ENCODE measurements at regions of chr6 and their contacts with region 1.

Region 1: DNA sequence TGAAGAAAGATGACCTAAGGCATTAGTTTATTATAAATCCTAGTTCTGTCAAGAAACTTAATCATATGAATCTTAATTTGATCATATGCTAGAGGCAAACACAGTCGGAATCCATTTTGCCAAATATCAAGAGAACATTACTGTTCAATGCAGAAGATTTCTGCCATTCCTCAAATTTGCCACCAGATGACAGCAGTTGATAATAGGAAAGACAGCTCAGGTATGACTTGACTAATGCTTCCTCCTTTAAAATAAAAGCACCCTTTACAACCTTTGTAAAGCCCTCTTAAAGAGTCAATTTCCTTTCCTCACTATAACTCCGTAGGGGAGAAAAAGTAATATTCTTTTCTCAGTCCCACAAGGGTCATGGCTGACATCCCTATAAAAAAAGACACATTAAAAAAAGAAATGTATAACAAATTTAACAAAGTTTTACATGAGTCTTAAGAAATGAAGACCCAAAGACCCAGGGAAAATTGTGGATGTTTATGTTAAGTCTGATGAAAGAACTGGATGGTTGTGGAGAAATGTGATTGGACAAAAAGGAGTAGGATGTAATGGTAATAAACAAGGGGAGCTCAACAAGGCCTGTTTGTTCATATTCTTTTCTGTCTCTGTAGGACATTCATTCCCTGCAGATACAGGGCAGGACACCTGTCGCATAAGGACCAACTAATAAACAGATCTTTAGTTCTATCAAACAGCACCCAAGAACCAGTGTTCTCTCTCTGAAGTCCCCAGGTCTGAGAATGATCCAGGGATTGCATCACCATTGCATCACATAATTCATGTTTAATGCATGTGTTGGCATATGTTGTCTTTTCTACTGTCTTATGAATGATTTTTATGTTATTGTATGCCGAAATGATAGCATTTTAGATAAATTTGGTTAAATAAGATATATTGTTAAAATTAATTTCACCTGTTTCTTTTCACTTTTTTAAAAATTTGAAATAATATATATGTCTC is 23.0 kb upstream of the IL17A start:
- DNase-seq: no peak
- H3K4me3 ChIP-seq: no peak overlapping the region
- H3K27ac ChIP-seq: no peak overlapping the region
- H3K4me1 ChIP-seq: no peaks in the 10 kb centered on the region
- H3K27me3 ChIP-seq: peaks cover 4% of the 10 kb centered on the region
- CTCF ChIP-seq: peak; percentile 43

Region 2: GRCh38 chr6:51626391-51626790 is 536.8 kb before region 1 on chr6:
- intact Hi-C with region 1: no loop called
- DNase-seq: no peak
- H3K4me3 ChIP-seq: no peak overlapping the region
- H3K27ac ChIP-seq: no peak overlapping the region
- H3K4me1 ChIP-seq: no peaks in the 10 kb centered on the region
- H3K27me3 ChIP-seq: no peaks in the 10 kb centered on the region
- CTCF ChIP-seq: no peak

Region 3: GRCh38 chr6:52013035-52013434 is 150.2 kb before region 1 on chr6:
- intact Hi-C with region 1: no loop called
- DNase-seq: no peak
- H3K4me3 ChIP-seq: no peak overlapping the region
- H3K27ac ChIP-seq: no peak overlapping the region
- H3K4me1 ChIP-seq: no peaks in the 10 kb centered on the region
- H3K27me3 ChIP-seq: no peaks in the 10 kb centered on the region
- CTCF ChIP-seq: no peak

Region 4: GRCh38 chr6:52233975-52234823 is 71.0 kb after region 1 on chr6:
- intact Hi-C with region 1: loop called (anchors 5 kb)
- DNase-seq: peak; percentile 42
- H3K4me3 ChIP-seq: no peak overlapping the region
- H3K27ac ChIP-seq: no peak overlapping the region
- H3K4me1 ChIP-seq: no peaks in the 10 kb centered on the region
- H3K27me3 ChIP-seq: no peaks in the 10 kb centered on the region
- CTCF ChIP-seq: peak; percentile 47

Region 5: GRCh38 chr6:52263709-52264540 is 100.7 kb after region 1 on chr6:
- intact Hi-C with region 1: loop called (anchors 10 kb)
- DNase-seq: peak; percentile 56
- H3K4me3 ChIP-seq: no peak overlapping the region
- H3K27ac ChIP-seq: no peak overlapping the region
- H3K4me1 ChIP-seq: no peaks in the 10 kb centered on the region
- H3K27me3 ChIP-seq: no peaks in the 10 kb centered on the region
- CTCF ChIP-seq: peak; percentile 88

Region 6: GRCh38 chr6:52399511-52400312 is 236.5 kb after region 1 on chr6:
- intact Hi-C with region 1: loop called (anchors 10 kb)
- DNase-seq: peak; percentile 60
- H3K4me3 ChIP-seq: no peak overlapping the region
- H3K27ac ChIP-seq: peak overlapping the region; percentile 11
- H3K4me1 ChIP-seq: no peaks in the 10 kb centered on the region
- H3K27me3 ChIP-seq: no peaks in the 10 kb centered on the region
- CTCF ChIP-seq: peak; percentile 78

Measured in colonic mucosa (tissue), 4 donors.